ENCODE measurements at regions of chr5 and their contacts with region 1.

Region 1: GRCh38 chr5:61162010-61162831 is at the start of gene SMIM15:
- DNase-seq: peak; percentile 73 to 85
- ATAC-seq: peak; percentile 91 to 93 (median 91)
- H3K4me3 ChIP-seq: peak within 1 kb of the TSS; percentile 97
- H3K4me3 Mint-ChIP-seq: peak within 1 kb of the TSS; percentile 97
- H3K27ac ChIP-seq: peak within 1 kb of the TSS; percentile 86
- H3K27ac Mint-ChIP-seq: peak within 1 kb of the TSS; percentile 92 to 97
- H3K4me1 ChIP-seq: peaks cover 6% of the 10 kb centered on the region
- H3K4me1 Mint-ChIP-seq: peaks cover 38 to 42% of the 10 kb centered on the region in 2 donors
- H3K27me3 ChIP-seq: no peaks in the 10 kb centered on the region
- H3K27me3 Mint-ChIP-seq: no peaks in the 10 kb centered on the region
- CTCF ChIP-seq: no peak
- total RNA-seq, gene SMIM15: 19.5 to 24.1 (median 23.8) TPM

Region 2: DNA sequence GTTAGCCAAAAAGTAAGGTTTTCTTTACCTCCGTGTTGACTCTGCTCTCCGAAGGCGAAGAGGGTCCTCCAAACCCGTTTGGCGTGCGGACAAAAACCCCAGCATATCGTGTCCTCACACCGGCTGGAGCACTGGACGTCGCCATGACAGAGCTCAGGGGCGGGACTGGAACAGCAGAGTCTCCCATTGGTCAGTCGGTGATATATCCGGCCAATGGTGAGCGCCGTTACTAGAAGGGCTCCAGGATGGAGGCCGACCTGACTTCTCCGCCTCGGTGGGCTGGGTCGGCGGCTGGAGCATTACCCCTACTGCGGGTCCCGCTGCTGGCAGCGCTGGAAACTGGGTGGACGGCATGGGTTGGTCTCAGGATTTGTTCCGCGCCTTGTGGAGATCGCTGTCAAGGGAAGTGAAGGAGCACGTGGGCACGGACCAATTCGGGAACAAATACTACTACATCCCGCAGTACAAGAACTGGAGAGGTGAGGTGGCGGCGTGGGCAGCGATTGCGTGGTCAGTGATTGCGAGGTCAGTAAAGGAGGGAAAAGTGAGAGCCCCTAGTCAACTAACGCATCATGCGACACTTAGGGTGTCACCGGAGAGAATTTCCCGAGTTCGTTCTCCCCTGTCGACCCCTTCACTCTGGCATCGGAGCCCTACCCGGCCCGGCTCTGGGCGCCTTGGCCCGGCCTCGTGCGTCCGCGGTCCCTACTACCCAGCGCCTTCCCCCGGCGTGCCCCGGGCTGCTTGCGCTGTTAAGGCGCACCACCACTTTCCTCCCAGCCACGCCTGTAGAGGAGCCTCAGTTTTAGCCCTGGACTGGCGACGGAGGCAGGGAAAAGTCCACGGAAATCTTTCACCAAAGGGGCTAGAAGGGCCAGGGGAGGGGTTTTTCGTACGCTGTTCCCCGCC is 217.1 kb before region 1 on chr5 and contains the starts of genes ERCC8 and NDUFAF2:
- intact Hi-C with region 1: loop called (anchors 10 kb)
- DNase-seq: peak; percentile 88 to 93
- ATAC-seq: peak; percentile 98 to 100 (median 99)
- H3K4me3 ChIP-seq: peak within 1 kb of the TSS; percentile 70
- H3K4me3 Mint-ChIP-seq: no peak within 1 kb of the TSS
- H3K27ac ChIP-seq: peak within 1 kb of the TSS; percentile 49
- H3K27ac Mint-ChIP-seq: no peak within 1 kb of the TSS
- H3K4me1 ChIP-seq: peaks cover 12% of the 10 kb centered on the region
- H3K4me1 Mint-ChIP-seq: peaks cover 10 to 11% of the 10 kb centered on the region in 2 donors
- H3K27me3 ChIP-seq: no peaks in the 10 kb centered on the region
- H3K27me3 Mint-ChIP-seq: no peaks in the 10 kb centered on the region
- CTCF ChIP-seq: no peak
- total RNA-seq, gene ERCC8: 4.8 to 9.1 (median 5.5) TPM
- total RNA-seq, gene NDUFAF2: 5.6 to 7.6 (median 7.0) TPM

Region 3: GRCh38 chr5:61331407-61332357 is 169.5 kb after region 1 on chr5 and contains the start of gene ZSWIM6:
- intact Hi-C with region 1: loop called (anchors 2 kb)
- DNase-seq: peak; percentile 99 to 100
- ATAC-seq: peak; percentile 82 to 95 (median 84)
- H3K4me3 ChIP-seq: peak within 1 kb of the TSS; percentile 97
- H3K4me3 Mint-ChIP-seq: peak within 1 kb of the TSS; percentile 97
- H3K27ac ChIP-seq: peak within 1 kb of the TSS; percentile 94
- H3K27ac Mint-ChIP-seq: peak within 1 kb of the TSS; percentile 90 to 99
- H3K4me1 ChIP-seq: peaks cover 22% of the 10 kb centered on the region
- H3K4me1 Mint-ChIP-seq: peaks cover 46 to 53% of the 10 kb centered on the region in 2 donors
- H3K27me3 ChIP-seq: no peaks in the 10 kb centered on the region
- H3K27me3 Mint-ChIP-seq: peaks cover 16 to 38% of the 10 kb centered on the region in 2 donors
- CTCF ChIP-seq: no peak
- total RNA-seq, gene ZSWIM6: 8.7 to 11.4 (median 10.5) TPM

Region 4: DNA sequence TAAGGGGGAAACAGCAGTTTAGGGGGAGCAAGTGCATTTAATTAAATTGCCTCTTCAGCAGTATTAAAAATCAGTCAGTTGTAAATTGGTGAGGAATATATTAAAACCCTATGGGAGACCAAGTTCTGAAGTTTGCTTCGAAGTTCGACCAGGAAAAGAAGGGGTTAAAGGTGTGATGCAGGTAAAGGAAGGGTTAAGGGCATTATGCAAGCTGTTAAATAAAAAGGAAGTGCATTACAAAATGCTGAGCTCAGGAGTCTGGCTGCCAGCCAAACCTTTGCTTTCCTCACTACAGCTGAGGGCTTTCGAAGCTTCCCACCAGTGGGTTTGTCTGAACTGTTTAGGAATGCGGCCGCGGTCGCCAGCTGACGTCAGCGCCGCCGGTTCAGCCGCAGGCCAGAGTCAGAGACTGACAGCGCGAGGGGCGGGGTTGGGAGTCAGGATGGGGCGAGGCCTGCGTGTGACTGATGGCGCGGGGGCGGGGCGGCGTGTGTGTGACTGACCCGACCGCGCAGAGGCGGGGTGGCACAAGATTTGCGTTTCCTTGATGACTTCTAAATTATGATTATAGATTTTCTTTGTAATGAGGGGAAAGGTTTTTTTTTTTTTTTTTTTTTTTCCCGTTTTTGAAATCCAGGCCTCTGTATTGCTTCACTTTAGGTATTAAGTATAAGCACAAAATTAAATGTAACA is 246.4 kb after region 1 on chr5:
- intact Hi-C with region 1: loop called (anchors 1 kb)
- DNase-seq: peak; percentile 97 to 99
- ATAC-seq: peak; percentile 97 to 98 (median 97)
- H3K4me3 ChIP-seq: peak overlapping the region; percentile 18
- H3K4me3 Mint-ChIP-seq: peak overlapping the region; percentile 74
- H3K27ac ChIP-seq: peak overlapping the region; percentile 44
- H3K27ac Mint-ChIP-seq: peak overlapping the region; percentile 91 to 92
- H3K4me1 ChIP-seq: no peaks in the 10 kb centered on the region
- H3K4me1 Mint-ChIP-seq: peaks cover 23 to 32% of the 10 kb centered on the region in 2 donors
- H3K27me3 ChIP-seq: no peaks in the 10 kb centered on the region
- H3K27me3 Mint-ChIP-seq: no peaks in the 10 kb centered on the region
- CTCF ChIP-seq: no peak